GM13976 (cell line): ENCODE measurements at regions of chr18 and their contacts with region 1.

Region 1: GRCh38 chr18:9925369-9925768 is 11.6 kb downstream of the VAPA start:
- DNase-seq: no peak
- CTCF ChIP-seq: no peak

Region 2: DNA sequence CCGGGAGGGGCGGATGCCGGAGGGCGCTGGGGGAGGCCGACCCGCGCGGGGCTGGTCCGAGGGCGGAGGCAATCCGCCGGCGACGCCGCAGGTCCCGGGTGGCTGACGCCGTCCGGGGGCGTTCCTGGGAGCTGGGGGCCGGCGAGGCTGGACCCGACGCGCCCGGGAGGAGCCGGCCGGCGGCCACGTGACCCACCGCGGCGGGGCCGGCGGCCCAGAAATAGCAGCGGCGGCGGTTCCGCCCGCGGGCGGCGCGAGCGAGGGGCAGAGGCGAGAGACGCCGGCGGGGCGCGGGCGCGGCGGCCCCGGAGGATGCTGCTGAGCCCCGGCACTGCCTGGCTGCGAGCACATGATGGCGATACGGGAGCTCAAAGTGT is 217.3 kb before region 1 on chr18 and contains the start of gene RAB31:
- in situ Hi-C with region 1: loop called (anchors 25 kb)
- DNase-seq: peak; percentile 80
- CTCF ChIP-seq: peak; percentile 10

Region 3: DNA sequence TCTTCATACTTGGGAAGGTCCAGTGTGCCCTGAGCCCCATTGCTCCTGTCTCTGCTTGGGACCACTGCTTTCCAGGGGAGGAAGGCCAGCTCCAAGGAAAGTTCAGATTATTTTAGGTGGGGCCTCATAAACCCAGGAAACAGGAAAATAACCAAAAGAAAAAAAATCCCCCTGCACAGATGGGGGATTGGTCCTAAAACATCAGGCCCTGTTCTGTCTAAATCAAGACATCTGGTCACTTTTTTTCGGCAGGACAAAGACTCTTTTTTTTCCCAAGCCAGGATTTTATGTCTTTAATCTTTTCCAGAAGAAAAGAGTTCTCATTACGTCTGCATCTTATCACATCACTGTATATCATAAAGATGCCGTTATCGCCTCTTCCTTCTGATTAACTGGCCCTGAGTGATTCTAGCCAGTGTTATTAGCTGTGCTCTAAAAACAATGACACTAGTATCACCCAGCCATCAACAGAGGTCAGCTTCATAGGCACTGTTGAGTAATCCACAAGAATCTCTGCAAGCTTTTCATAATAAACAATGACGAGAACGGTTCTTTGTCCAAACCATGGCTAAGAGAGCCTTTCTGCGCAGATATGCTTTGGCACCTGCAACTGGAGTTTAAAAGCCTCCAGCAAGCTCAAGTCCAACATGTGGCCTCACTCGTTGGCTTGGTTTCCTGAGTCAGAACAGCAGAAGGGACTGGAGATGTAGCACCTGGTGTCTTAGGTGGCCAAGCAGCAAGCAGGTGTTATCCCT is 126.7 kb after region 1 on chr18:
- in situ Hi-C with region 1: no loop called
- DNase-seq: no peak
- CTCF ChIP-seq: no peak

Region 4: DNA sequence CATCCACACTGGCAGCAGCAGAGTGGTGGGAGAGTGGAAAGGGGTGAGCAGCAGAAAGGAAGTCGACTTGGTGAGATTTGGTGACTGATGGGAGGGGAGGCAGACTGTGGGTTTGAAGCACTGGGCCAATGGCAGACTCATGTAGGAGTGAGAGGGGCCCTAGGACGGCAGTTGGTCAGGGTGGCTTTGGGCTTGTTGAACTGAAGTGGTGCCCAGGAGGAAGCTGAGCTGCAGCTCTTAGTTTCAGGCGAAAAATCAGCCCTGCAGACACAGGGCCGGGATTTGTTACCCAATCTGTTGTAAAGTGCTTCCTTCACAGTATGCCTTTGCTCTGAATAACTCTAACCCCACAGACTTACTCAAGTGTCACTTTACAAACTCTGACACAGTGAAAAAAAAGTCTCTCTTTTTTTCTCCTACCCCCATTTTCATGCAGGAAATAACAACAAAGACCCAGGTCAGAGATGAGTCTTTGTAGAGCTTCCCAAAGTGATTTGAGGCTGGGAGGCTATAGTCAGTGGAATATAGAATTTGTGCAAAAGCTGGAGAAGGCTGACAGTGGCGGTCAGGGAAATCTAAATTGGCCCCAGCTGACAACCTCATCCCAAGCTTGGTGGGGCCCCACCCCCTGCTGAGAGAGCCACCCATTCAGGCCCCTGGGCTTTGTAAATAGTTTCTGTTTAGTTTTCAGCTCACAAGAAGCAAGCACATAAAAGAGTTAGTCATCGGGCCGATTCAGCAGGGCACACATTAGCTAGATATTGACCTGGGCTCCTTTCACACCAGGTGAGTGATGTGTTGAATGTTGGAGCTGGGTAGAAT is 215.3 kb after region 1 on chr18:
- in situ Hi-C with region 1: no loop called
- DNase-seq: no peak
- CTCF ChIP-seq: no peak